ENCODE measurements at regions of chr20 and their contacts with region 1.

Region 1: GRCh38 chr20:62642040-62642665 is at the start of gene SLCO4A1:
- DNase-seq: peak; percentile 90
- ATAC-seq: peak; percentile 91
- H3K4me3 Mint-ChIP-seq: peak within 1 kb of the TSS; percentile 82
- H3K27ac Mint-ChIP-seq: peak within 1 kb of the TSS; percentile 81
- H3K4me1 Mint-ChIP-seq: peaks cover 39% of the 10 kb centered on the region
- H3K27me3 Mint-ChIP-seq: peaks cover 19% of the 10 kb centered on the region
- total RNA-seq, gene SLCO4A1: 74.7 to 79.2 TPM

Region 2: GRCh38 chr20:62182613-62183425 is 459.3 kb before region 1 on chr20 and contains the start of gene MTG2:
- CTCF ChIA-PET with region 1: no interaction called
- DNase-seq: peak; percentile 98
- ATAC-seq: peak; percentile 97
- H3K4me3 Mint-ChIP-seq: peak within 1 kb of the TSS; percentile 85
- H3K27ac Mint-ChIP-seq: peak within 1 kb of the TSS; percentile 94
- H3K4me1 Mint-ChIP-seq: peaks cover 33% of the 10 kb centered on the region
- H3K27me3 Mint-ChIP-seq: no peaks in the 10 kb centered on the region
- total RNA-seq, gene MTG2: 34.0 to 40.1 TPM

Region 3: DNA sequence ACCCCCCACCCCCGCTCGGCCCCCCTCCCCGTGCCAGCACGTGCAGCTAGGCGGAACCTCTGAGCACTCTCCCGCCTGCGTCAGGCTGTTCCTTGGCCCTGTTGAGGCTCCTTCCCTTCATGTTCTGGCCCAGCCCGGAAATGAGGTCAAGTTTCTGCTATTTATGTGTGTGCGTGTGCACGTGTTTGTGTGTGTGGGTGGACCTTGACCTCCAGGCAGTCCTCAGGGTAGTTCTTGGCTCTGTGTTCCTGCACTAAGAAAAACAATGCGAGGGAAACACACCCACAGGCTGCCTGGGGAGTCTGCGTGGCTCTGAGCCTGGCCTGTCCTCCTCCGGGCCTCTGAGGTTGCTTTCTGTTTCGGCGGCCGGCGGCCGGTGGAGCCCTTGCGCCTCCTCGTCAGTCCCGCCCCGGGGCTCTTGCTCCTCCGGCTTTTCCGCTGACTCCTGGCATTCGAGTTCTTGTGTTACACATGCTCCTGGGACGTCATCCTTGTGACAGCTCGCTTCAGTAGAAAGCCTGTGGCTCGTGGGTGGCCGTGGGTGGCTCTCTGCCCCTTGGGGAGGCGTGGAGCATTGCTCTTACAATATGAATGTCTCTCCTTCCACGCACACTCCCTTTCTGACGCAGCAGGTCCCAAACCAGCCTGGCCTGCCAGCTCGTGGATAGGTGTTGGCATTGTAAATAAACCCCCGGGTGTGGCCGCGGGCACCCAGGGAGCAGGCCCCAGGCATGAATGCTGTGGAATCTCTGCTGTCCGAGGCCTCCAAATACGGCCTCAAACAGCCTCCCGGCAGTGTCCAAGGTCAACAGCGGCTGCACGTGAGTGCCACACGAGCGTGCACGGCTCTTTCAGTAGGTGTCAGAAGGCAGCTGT is 10.1 kb after region 1 on chr20:
- CTCF ChIA-PET with region 1: interaction called, 19 read pairs
- DNase-seq: peak; percentile 88
- ATAC-seq: peak; percentile 64
- H3K4me3 Mint-ChIP-seq: peak overlapping the region; percentile 75
- H3K27ac Mint-ChIP-seq: peak overlapping the region; percentile 96
- H3K4me1 Mint-ChIP-seq: peaks cover 60% of the 10 kb centered on the region
- H3K27me3 Mint-ChIP-seq: no peaks in the 10 kb centered on the region

Region 4: GRCh38 chr20:62675156-62675876 is 33.2 kb after region 1 on chr20:
- CTCF ChIA-PET with region 1: no interaction called
- DNase-seq: no peak
- ATAC-seq: no peak
- H3K4me3 Mint-ChIP-seq: no peak overlapping the region
- H3K27ac Mint-ChIP-seq: no peak overlapping the region
- H3K4me1 Mint-ChIP-seq: peaks cover 15% of the 10 kb centered on the region
- H3K27me3 Mint-ChIP-seq: no peaks in the 10 kb centered on the region

Measured in activated CD8-positive, alpha-beta memory T cell treated with anti-CD3 and anti-CD28 coated beads, Interleukin-2, amount 10 ng/mL, durations not matched to agents 7 days and 5 days (primary cell).